Activated CD4-positive, alpha-beta T cell treated with anti-CD3 and anti-CD28 coated beads for 36 hours (primary cell): ENCODE measurements at regions of chr16 and their contacts with region 1.

Region 1: DNA sequence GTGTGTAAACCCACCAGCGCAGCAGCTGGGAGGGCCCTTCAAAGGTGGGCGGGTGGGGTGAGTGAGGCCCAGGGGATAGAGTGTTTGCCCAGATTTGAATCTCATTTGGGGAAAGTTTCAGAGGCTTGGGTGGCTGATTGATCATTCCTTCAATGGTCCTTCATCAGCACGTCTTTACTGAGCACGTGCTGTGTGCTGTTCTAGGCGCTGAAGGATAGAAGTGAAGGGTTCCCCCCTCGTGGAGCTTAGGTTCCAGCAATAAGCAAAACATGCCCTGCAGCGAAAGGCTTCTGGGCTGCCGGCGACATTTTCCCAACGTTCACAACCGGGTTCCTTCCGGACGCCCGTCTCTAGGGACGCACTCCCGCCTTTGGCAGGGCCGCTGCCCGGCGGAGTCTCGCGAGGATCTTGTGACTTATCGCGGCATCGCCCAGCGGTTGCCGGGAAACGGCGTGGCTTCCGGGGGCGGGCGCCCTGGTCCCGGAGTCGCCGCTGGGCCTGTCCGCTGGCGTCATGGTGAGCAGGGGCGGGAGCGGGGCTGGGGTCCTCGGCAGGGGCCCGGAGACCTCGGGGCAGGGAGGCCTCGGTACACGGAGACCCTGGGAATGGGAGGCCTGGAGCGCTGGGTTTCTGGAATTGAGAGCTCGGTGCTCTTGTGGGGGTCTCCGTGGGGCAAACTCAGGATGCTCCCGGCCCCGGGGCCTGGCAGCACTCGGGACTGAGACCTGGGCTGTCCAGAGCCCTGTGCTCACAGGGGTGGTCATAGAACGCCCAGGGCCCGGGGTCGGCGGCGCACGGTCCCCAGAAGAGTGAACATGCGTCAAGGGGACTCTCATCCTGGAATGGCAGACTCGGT is 3.2 kb upstream of the DBNDD1 start:
- DNase-seq: peak; percentile 92
- ATAC-seq: peak; percentile 86
- H3K4me3 Mint-ChIP-seq: peak overlapping the region; percentile 66
- H3K27ac Mint-ChIP-seq: peak overlapping the region; percentile 77
- H3K4me1 Mint-ChIP-seq: peaks cover 21% of the 10 kb centered on the region
- H3K27me3 Mint-ChIP-seq: peaks cover 5% of the 10 kb centered on the region

Region 2: DNA sequence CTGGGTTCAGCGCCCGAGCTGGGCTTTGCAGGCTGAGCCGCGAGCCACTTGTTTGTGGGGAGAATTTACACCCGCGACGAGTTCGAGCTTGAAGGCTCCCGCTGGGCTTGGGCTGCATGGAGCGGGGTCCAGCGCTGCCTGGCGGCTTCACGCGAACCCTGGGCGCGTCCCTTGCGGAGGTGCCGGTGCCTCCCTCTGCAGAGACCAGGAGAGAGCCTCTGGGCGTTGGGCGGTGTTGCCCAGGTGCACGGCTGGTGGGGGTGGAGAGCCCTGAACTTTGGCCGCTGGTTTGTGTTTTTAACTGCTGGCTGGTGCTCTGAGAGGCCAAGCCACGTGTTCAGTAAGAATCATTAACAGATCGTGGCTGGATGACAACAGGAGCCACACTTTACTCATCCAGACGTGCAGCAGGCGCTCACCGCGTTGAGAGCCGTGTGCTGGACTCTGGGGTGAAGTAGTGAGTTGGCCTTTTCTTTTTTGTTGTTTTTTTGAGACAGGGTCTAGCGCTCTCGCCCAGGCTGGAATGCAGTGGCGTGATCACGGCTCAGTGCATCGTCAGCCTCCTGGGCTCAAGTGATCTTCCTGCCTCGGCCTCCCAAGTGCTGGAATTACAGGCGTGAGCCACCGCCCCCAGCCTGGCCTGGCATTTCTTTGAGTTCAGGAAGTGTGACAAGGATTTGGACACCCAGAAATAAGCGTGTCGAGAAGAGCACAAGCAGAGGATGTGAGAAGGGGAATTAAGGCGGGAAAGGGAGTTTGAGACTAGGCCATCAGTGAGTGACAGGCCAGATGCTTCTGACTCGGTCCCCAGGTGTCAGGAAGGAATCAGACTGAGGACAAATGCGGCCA is 335.1 kb before region 1 on chr16:
- CTCF ChIA-PET with region 1: no interaction called
- POLR2A ChIA-PET with region 1: no interaction called
- intact Hi-C with region 1: no loop called
- DNase-seq: peak; percentile 43
- ATAC-seq: peak; percentile 32
- H3K4me3 Mint-ChIP-seq: peak overlapping the region; percentile 86
- H3K27ac Mint-ChIP-seq: peak overlapping the region; percentile 88
- H3K4me1 Mint-ChIP-seq: peaks cover 14% of the 10 kb centered on the region
- H3K27me3 Mint-ChIP-seq: no peaks in the 10 kb centered on the region

Region 3: DNA sequence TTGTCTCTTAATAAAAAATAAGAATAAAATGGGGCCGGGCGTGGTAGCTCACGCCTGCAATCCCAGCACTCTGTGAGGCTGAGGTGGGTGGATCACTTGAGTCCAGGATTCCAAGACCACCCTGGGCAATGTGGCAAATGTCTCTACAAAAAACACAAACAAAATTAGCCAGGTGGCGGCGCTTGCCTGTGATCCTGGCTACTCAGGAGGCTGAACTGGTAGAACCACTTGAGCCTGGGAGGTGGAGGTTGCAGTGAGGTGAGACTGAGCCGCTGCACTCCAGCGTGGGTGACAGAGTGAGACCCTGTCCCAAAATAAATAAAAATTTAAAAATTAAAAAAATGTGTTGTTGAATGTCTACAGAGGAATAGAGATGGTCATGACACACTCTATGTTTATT is 76.8 kb before region 1 on chr16:
- CTCF ChIA-PET with region 1: no interaction called
- POLR2A ChIA-PET with region 1: no interaction called
- intact Hi-C with region 1: loop called in 1 of 2 experiments (anchors 1 kb)
- DNase-seq: no peak
- ATAC-seq: no peak
- H3K4me3 Mint-ChIP-seq: no peak overlapping the region
- H3K27ac Mint-ChIP-seq: no peak overlapping the region
- H3K4me1 Mint-ChIP-seq: no peaks in the 10 kb centered on the region
- H3K27me3 Mint-ChIP-seq: peaks cover 20% of the 10 kb centered on the region

Region 4: GRCh38 chr16:89972244-89973234 is 49.9 kb before region 1 on chr16:
- CTCF ChIA-PET with region 1: no interaction called
- POLR2A ChIA-PET with region 1: no interaction called
- intact Hi-C with region 1: loop called in 1 of 2 experiments (anchors 1 kb)
- DNase-seq: peak; percentile 94
- ATAC-seq: peak; percentile 94
- H3K4me3 Mint-ChIP-seq: peak overlapping the region; percentile 99
- H3K27ac Mint-ChIP-seq: peak overlapping the region; percentile 95
- H3K4me1 Mint-ChIP-seq: peaks cover 32% of the 10 kb centered on the region
- H3K27me3 Mint-ChIP-seq: no peaks in the 10 kb centered on the region

Region 5: DNA sequence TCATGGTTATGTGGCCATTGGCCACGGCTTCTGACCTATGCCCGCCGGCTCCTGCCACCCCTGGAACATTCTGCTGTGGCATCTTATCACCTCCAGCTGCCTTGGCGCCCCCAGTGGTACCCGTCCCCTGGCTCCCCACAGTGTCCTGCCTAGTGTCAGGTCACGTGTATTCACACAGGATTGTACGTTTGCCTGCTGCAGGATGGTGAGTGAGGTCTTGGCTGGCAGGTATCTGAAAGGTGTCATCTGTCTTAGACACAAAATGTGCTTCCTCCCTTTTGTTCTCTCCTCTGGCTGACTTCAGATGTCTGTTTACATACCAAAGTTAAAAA is 28.1 kb before region 1 on chr16:
- CTCF ChIA-PET with region 1: no interaction called
- POLR2A ChIA-PET with region 1: interaction called, 4 read pairs
- intact Hi-C with region 1: loop called in 1 of 2 experiments (anchors 2 kb)
- DNase-seq: no peak
- ATAC-seq: no peak
- H3K4me3 Mint-ChIP-seq: peak overlapping the region; percentile 71
- H3K27ac Mint-ChIP-seq: peak overlapping the region; percentile 82
- H3K4me1 Mint-ChIP-seq: peaks cover 12% of the 10 kb centered on the region
- H3K27me3 Mint-ChIP-seq: peaks cover 4% of the 10 kb centered on the region